Activated naive CD8-positive, alpha-beta T cell treated with anti-CD3 and anti-CD28 coated beads, Interleukin-2, amount 10 ng/mL, durations not matched to agents 7 days and 5 days (primary cell): ENCODE measurements at regions of chr1 and their contacts with region 1.

Region 1: GRCh38 chr1:151059078-151059907 is at the start of gene CDC42SE1:
- DNase-seq: peak; percentile 90
- ATAC-seq: peak; percentile 76
- H3K4me3 Mint-ChIP-seq: peak within 1 kb of the TSS; percentile 92
- H3K27ac Mint-ChIP-seq: peak within 1 kb of the TSS; percentile 96
- H3K4me1 Mint-ChIP-seq: peaks cover 51% of the 10 kb centered on the region
- H3K27me3 Mint-ChIP-seq: no peaks in the 10 kb centered on the region
- total RNA-seq, gene CDC42SE1: 282 to 294 TPM

Region 2: GRCh38 chr1:151006327-151007052 is 52.8 kb before region 1 on chr1 and contains the start of gene MINDY1:
- POLR2A ChIA-PET with region 1: interaction called, 18 read pairs
- DNase-seq: peak; percentile 51
- ATAC-seq: peak; percentile 20
- H3K4me3 Mint-ChIP-seq: peak within 1 kb of the TSS; percentile 98
- H3K27ac Mint-ChIP-seq: peak within 1 kb of the TSS; percentile 96
- H3K4me1 Mint-ChIP-seq: peaks cover 73% of the 10 kb centered on the region
- H3K27me3 Mint-ChIP-seq: no peaks in the 10 kb centered on the region
- total RNA-seq, gene MINDY1: 11.5 to 12.7 TPM

Region 3: DNA sequence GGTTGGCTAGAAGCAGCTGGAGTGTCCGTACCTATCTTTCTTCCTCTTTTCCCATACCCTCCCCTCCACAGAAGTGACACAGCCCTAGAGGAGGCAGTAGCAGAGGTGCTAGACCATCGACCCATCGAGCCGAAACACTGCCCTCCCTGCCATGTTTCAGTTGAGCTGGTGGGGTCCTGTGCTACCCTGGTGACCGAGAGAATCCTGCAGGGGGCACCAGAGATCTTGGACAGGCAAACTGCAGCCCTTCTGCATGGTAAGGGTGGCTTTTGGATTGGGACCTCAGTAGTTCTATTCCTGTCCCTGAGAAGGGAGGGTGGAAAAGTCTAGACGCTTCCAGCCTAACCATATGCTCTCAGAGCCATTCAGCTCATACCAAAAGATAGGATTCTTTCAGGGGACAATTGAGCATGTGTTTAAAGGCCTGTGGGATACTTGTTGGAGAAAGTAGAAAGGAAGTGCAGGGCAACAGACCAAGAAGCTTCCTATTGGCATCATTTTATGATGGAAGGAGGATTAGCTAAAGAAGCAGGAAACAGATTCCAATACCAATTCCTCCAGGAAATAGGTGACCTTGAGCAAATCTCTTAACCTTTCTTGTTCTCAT is 34.6 kb before region 1 on chr1:
- POLR2A ChIA-PET with region 1: interaction called, 10 read pairs
- DNase-seq: peak; percentile 80
- ATAC-seq: peak; percentile 100
- H3K4me3 Mint-ChIP-seq: peak overlapping the region; percentile 63
- H3K27ac Mint-ChIP-seq: peak overlapping the region; percentile 70
- H3K4me1 Mint-ChIP-seq: peaks cover 5% of the 10 kb centered on the region
- H3K27me3 Mint-ChIP-seq: no peaks in the 10 kb centered on the region

Region 4: GRCh38 chr1:151047925-151048645 is 11.2 kb before region 1 on chr1:
- POLR2A ChIA-PET with region 1: interaction called, 90 read pairs
- DNase-seq: peak; percentile 74
- ATAC-seq: peak; percentile 86
- H3K4me3 Mint-ChIP-seq: peak overlapping the region; percentile 89
- H3K27ac Mint-ChIP-seq: peak overlapping the region; percentile 85
- H3K4me1 Mint-ChIP-seq: peaks cover 13% of the 10 kb centered on the region
- H3K27me3 Mint-ChIP-seq: no peaks in the 10 kb centered on the region

Region 5: GRCh38 chr1:151070474-151071276 is 11.4 kb after region 1 on chr1 and contains the start of gene GABPB2:
- POLR2A ChIA-PET with region 1: interaction called, 74 read pairs
- DNase-seq: peak; percentile 92
- ATAC-seq: peak; percentile 83
- H3K4me3 Mint-ChIP-seq: peak within 1 kb of the TSS; percentile 97
- H3K27ac Mint-ChIP-seq: peak within 1 kb of the TSS; percentile 99
- H3K4me1 Mint-ChIP-seq: peaks cover 16% of the 10 kb centered on the region
- H3K27me3 Mint-ChIP-seq: no peaks in the 10 kb centered on the region
- total RNA-seq, gene GABPB2: 32.9 to 34.0 TPM

Region 6: DNA sequence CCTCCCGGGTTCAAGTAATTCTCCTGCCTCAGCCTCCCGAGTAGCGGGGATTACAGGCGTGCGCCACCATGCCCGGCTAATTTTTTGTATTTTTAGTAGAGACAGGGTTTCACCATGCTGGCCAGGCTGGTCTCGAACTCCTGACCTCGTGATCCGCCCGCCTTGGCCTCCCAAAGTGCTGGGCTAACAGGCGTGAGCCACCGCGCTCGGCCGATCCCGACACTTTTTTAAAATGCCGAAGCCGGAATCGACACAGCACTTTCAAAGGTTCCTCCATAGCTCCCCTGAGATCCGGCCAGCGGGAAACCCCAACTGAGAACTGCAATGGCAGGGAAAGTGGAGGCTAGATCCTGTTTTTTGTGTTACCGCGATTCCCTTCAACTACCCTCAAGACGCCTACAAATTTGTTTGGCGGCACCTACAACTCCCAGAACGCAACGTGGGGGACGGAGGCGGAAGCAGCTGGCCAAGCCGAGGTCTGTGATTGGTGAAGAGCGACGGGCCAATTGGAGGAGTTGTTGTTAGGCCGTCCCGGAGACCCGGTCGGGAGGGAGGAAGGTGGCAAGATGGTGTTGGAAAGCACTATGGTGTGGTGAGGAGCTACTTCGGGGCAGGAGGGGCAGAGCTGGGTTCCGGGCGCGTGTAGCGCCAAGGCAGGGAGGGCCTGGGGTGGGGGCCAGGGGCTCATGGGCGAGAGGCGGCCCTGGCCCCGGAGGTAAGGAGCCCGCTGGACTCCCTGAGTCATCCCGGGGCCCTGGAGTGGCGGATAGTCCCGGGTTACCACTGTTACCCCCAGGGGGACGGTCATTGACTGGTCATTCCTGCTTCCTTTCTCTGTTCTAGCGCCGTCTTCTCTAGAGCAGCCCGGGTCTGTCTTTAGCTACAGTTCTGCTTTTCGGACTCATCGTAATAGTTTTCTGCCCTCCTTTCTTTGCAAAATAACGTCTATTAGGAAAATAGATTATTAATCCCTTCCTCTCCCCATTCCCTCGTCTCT is 195.2 kb after region 1 on chr1 and contains the start of gene PSMD4:
- POLR2A ChIA-PET with region 1: no interaction called
- DNase-seq: peak; percentile 86
- ATAC-seq: peak; percentile 97
- H3K4me3 Mint-ChIP-seq: peak within 1 kb of the TSS; percentile 91
- H3K27ac Mint-ChIP-seq: peak within 1 kb of the TSS; percentile 90
- H3K4me1 Mint-ChIP-seq: peaks cover 20% of the 10 kb centered on the region
- H3K27me3 Mint-ChIP-seq: no peaks in the 10 kb centered on the region
- total RNA-seq, gene PSMD4: 170 to 174 TPM